ENCODE measurements at regions of chr1 and their contacts with region 1.

Region 1: DNA sequence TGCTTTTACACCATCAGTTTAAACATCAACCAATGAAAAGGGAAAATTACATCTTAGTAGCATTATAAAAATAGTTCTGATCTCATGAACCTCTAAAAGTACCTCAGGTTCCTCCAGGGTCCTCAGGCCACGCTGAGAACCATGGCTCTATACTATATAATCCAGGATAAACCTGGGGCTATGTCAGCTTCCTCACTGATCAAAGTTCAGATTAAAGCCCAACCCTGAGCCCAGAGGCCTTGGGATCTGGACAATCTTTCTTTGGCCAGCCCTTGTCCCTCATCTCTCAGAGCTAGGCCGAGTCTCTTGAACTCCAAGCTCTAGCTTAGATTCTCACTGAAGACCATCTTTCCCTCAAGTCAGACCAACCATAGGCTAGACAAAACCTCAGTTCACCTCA is 168.3 kb downstream of the PLPP3 start:
- DNase-seq: no peak
- H3K4me3 ChIP-seq: no peak overlapping the region
- H3K27me3 ChIP-seq: no peaks in the 10 kb centered on the region
- CTCF ChIP-seq: no peak

Region 2: DNA sequence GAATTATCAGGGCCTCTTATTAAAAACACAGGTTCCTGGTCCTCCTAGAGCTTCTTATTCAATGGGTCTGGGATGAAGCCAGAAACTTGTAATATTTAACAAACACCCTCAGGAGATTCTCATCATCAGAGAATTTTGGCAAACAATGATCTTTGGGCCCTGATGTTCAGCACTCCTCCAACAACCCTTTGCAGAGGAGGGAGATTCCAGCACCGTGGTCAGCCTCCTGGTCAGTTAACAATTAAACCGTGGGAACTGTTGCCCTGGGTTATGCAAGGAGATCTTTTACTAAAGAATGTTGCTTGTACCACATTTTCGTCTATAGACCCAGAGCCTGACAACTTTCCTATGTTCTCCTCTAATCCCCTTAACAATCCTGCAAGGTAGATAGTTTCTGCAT is 126.1 kb before region 1 on chr1:
- CTCF ChIA-PET with region 1: no interaction called
- POLR2A ChIA-PET with region 1: interaction called, 11 read pairs
- DNase-seq: peak; percentile 77
- H3K4me3 ChIP-seq: no peak overlapping the region
- H3K27me3 ChIP-seq: no peaks in the 10 kb centered on the region
- CTCF ChIP-seq: no peak

Measured in BJ (cell line).